ENCODE measurements at regions of chr18 and their contacts with region 1.

Region 1: GRCh38 chr18:4101009-4101408 is 354.1 kb downstream of the DLGAP1 start:
- DNase-seq: no peak
- ATAC-seq: no peak
- H3K4me3 ChIP-seq: no peak overlapping the region
- H3K27ac ChIP-seq: no peak overlapping the region
- H3K4me1 ChIP-seq: no peaks in the 10 kb centered on the region
- H3K27me3 ChIP-seq: no peaks in the 10 kb centered on the region
- CTCF ChIP-seq: no peak
- POLR2A ChIP-seq: no peak

Region 2: GRCh38 chr18:5057386-5058348 is 956.7 kb after region 1 on chr18:
- intact Hi-C with region 1: loop called in 8 of 10 experiments (anchors 2 to 10 kb)
- DNase-seq: peak; percentile 35 to 62 (median 58)
- ATAC-seq: peak in 3 of 4 donors; percentile 63 to 77 (median 72)
- H3K4me3 ChIP-seq: peak overlapping the region in 1 of 12 donors; percentile 9
- H3K27ac ChIP-seq: no peak overlapping the region
- H3K4me1 ChIP-seq: peaks cover 0 to 16% (median 0%) of the 10 kb centered on the region in 12 donors
- H3K27me3 ChIP-seq: no peaks in the 10 kb centered on the region
- CTCF ChIP-seq: peak; percentile 48 to 76 (median 68)
- POLR2A ChIP-seq: no peak

Measured in heart left ventricle (tissue), 16 donors.